ENCODE measurements at regions of chr11 and their contacts with region 1.

Region 1: GRCh38 chr11:96054870-96055705 is 131.2 kb upstream of the MTMR2 start:
- DNase-seq: no peak
- ATAC-seq: peak; percentile 29 to 74
- H3K4me3 ChIP-seq: no peak overlapping the region
- H3K27ac ChIP-seq: no peak overlapping the region
- H3K4me1 ChIP-seq: peaks cover 38% of the 10 kb centered on the region
- H3K27me3 ChIP-seq: no peaks in the 10 kb centered on the region
- CTCF ChIP-seq: peak; percentile 55

Region 2: GRCh38 chr11:96342961-96343711 is 288.0 kb after region 1 on chr11 and contains the start of gene MAML2:
- intact Hi-C with region 1: loop called (anchors 10 kb)
- DNase-seq: peak; percentile 94
- ATAC-seq: peak; percentile 92 to 96
- H3K4me3 ChIP-seq: peak within 1 kb of the TSS; percentile 82
- H3K27ac ChIP-seq: peak within 1 kb of the TSS; percentile 85
- H3K4me1 ChIP-seq: peaks cover 31% of the 10 kb centered on the region
- H3K27me3 ChIP-seq: no peaks in the 10 kb centered on the region
- CTCF ChIP-seq: peak; percentile 96
- total RNA-seq, gene MAML2: 31.5 TPM